ENCODE measurements at regions of chr22 and their contacts with region 1.

Region 1: GRCh38 chr22:27804470-27805297 is 3.1 kb upstream of the MN1 start:
- DNase-seq: peak; percentile 6 to 67 (median 49)
- ATAC-seq: no peak
- H3K4me3 ChIP-seq: no peak overlapping the region
- H3K4me3 Mint-ChIP-seq: no peak overlapping the region
- H3K27ac ChIP-seq: no peak overlapping the region
- H3K27ac Mint-ChIP-seq: no peak overlapping the region
- H3K4me1 ChIP-seq: peaks cover 12% of the 10 kb centered on the region
- H3K4me1 Mint-ChIP-seq: peaks cover 14% of the 10 kb centered on the region
- H3K27me3 ChIP-seq: peaks cover 9 to 12% of the 10 kb centered on the region in 2 experiments
- H3K27me3 Mint-ChIP-seq: peaks cover 18% of the 10 kb centered on the region
- CTCF ChIP-seq: peak; percentile 60

Region 2: GRCh38 chr22:26679003-26679629 is 1125.6 kb before region 1 on chr22:
- CTCF ChIA-PET with region 1: interaction called, 3 read pairs
- POLR2A ChIA-PET with region 1: no interaction called
- intact Hi-C with region 1: loop called (anchors 2 kb)
- DNase-seq: peak; percentile 37 to 80 (median 70)
- ATAC-seq: peak; percentile 89
- H3K4me3 ChIP-seq: no peak overlapping the region
- H3K4me3 Mint-ChIP-seq: no peak overlapping the region
- H3K27ac ChIP-seq: no peak overlapping the region
- H3K27ac Mint-ChIP-seq: peak overlapping the region; percentile 76
- H3K4me1 ChIP-seq: peaks cover 46% of the 10 kb centered on the region
- H3K4me1 Mint-ChIP-seq: peaks cover 67% of the 10 kb centered on the region
- H3K27me3 ChIP-seq: no peaks in the 10 kb centered on the region
- H3K27me3 Mint-ChIP-seq: no peaks in the 10 kb centered on the region
- CTCF ChIP-seq: peak; percentile 97

Region 3: DNA sequence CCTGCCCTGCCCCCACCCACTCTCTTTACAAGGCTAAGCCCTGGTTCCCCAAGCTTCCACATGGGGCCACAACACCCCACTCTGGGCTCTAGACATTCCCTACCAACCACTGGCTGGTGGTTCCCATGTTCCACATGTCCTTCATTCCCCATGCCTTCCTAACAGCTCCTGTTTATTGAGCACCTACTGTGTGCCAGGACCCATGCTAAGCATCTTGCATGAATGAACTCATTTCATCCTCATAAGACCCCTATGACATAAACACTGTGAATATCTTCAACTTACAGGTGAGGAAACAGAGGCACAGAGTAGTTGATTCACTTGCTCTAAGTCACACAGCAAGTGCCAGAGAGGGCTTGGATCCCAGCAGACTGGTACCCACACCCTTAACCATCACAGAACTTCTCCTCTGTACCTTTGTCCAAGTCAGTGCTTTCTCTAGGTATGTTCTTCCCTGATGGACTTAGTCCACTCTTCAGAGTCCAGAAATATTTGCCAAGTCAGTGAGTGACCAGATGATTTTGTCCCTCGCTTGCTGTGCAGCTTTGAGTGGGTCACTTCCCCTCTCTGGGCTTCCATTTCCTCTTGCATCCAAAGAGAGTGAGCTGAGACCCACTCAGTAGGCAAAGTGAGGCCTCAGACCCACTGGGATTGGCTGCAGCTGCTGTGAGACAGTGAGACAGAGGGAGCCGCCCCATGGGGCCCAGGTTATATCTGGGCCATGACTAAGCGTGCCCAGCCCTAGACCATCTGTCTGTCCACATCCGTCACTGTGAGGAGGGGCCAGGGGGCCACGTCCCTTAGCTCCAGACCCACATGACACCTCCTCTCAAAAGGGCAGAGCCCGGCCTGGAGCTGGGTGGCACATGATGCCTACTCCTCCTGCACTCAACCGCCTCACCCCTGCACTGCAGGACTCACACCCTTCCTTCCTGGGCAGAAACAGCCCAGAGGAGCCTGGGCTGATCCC is 135.6 kb before region 1 on chr22:
- CTCF ChIA-PET with region 1: no interaction called
- POLR2A ChIA-PET with region 1: no interaction called
- intact Hi-C with region 1: no loop called
- DNase-seq: peak in 2 of 9 experiments; percentile 7 to 28
- ATAC-seq: no peak
- H3K4me3 ChIP-seq: no peak overlapping the region
- H3K4me3 Mint-ChIP-seq: no peak overlapping the region
- H3K27ac ChIP-seq: no peak overlapping the region
- H3K27ac Mint-ChIP-seq: no peak overlapping the region
- H3K4me1 ChIP-seq: no peaks in the 10 kb centered on the region
- H3K4me1 Mint-ChIP-seq: no peaks in the 10 kb centered on the region
- H3K27me3 ChIP-seq: peaks cover 0 to 8% of the 10 kb centered on the region in 2 experiments
- H3K27me3 Mint-ChIP-seq: peaks cover 25% of the 10 kb centered on the region
- CTCF ChIP-seq: no peak

Region 4: DNA sequence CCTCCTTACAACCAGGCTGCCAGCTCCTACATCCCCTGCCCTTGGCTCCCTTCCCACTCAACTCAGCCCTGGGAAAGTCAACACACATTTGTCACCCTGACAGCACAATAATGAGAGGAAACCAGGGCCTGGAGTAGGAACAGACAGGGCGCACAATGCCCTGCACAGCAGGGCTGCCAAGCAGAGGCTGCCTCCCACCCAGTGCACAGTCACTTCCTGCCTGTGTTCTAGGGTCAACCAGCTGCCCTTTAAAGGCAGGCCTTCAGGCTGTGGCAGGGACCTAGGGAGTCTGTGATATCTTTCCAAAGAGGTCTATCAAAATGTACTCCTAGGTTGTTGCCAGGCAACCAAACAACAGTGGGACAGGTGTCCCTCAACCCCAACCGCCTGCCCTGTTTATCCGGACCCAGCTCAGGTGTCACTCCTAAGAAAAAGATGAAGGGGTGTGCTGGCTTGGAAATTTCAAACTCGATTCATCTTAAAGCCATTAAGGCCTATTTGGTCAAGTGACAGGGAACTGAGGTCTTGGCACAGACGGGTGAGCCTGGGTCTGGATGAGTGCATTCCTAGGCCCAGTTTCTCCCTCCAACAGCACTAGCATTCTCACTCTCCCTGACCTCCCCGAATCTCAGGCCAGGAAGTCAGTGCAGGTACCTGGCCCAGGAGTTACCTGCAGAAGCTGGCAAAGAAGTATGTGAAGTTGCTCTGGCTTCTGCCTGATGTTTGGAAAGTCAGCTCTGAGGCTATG is 224.7 kb after region 1 on chr22:
- CTCF ChIA-PET with region 1: no interaction called
- POLR2A ChIA-PET with region 1: no interaction called
- intact Hi-C with region 1: no loop called
- DNase-seq: no peak
- ATAC-seq: no peak
- H3K4me3 ChIP-seq: no peak overlapping the region
- H3K4me3 Mint-ChIP-seq: no peak overlapping the region
- H3K27ac ChIP-seq: no peak overlapping the region
- H3K27ac Mint-ChIP-seq: no peak overlapping the region
- H3K4me1 ChIP-seq: no peaks in the 10 kb centered on the region
- H3K4me1 Mint-ChIP-seq: no peaks in the 10 kb centered on the region
- H3K27me3 ChIP-seq: no peaks in the 10 kb centered on the region
- H3K27me3 Mint-ChIP-seq: peaks cover 2% of the 10 kb centered on the region
- CTCF ChIP-seq: no peak